CD8-positive, alpha-beta memory T cell (primary cell): ENCODE measurements at regions of chr9 and their contacts with region 1.

Region 1: GRCh38 chr9:91422758-91423711 is 597 bp downstream of the NFIL3 start:
- DNase-seq: peak; percentile 36 to 81 (median 53)
- H3K4me3 ChIP-seq: peak overlapping the region; percentile 75
- H3K4me3 Mint-ChIP-seq: peak overlapping the region; percentile 88 to 98 (median 94)
- H3K27ac ChIP-seq: peak overlapping the region; percentile 67
- H3K27ac Mint-ChIP-seq: peak overlapping the region; percentile 82 to 95 (median 89)
- H3K4me1 ChIP-seq: peaks cover 38% of the 10 kb centered on the region
- H3K4me1 Mint-ChIP-seq: peaks cover 41 to 46% (median 44%) of the 10 kb centered on the region in 3 donors
- H3K27me3 ChIP-seq: no peaks in the 10 kb centered on the region
- H3K27me3 Mint-ChIP-seq: peaks cover 23 to 33% of the 10 kb centered on the region in 2 donors

Region 2: GRCh38 chr9:90914868-90915483 is 508.1 kb before region 1 on chr9:
- CTCF ChIA-PET with region 1: interaction called, 51 read pairs
- POLR2A ChIA-PET with region 1: no interaction called
- DNase-seq: peak; percentile 57 to 79 (median 59)
- H3K4me3 ChIP-seq: no peak overlapping the region
- H3K4me3 Mint-ChIP-seq: no peak overlapping the region
- H3K27ac ChIP-seq: no peak overlapping the region
- H3K27ac Mint-ChIP-seq: no peak overlapping the region
- H3K4me1 ChIP-seq: no peaks in the 10 kb centered on the region
- H3K4me1 Mint-ChIP-seq: no peaks in the 10 kb centered on the region
- H3K27me3 ChIP-seq: no peaks in the 10 kb centered on the region
- H3K27me3 Mint-ChIP-seq: no peaks in the 10 kb centered on the region

Region 3: DNA sequence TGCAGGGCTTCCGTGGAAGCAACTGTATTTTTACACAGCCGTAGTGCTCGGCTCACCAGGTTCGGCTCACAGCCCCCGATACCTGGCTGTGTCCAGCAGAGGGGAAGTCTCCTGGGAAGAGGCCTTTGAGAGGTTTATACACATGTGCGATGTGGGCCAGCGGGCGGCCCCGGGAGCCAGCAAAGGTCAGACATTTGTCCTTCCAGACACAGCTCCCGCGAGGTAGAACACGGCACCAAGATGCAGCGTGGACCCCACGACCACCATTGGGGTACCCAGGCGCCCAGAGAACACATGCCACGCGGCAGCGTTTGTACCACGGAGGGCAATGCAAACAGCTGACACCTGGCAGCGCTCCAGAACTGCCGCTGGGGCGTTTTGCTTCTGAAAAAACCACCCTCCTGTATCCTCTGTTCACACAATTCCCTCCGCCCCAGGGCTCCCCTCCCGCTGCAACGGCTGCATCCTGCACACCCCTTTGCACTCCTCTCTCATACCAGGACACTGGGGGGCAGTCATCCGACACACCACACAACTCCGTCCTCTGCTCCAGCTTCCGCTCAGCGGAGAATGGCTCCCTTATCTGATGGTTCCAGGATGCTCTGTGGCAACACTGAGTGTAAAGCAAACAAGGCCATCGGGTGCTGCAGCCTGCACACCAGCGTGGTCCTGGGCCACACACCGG is 386.1 kb before region 1 on chr9:
- CTCF ChIA-PET with region 1: interaction called, 34 read pairs
- POLR2A ChIA-PET with region 1: no interaction called
- DNase-seq: peak; percentile 28 to 73 (median 50)
- H3K4me3 ChIP-seq: no peak overlapping the region
- H3K4me3 Mint-ChIP-seq: peak overlapping the region in 5 of 7 donors; percentile 33 to 73 (median 63)
- H3K27ac ChIP-seq: no peak overlapping the region
- H3K27ac Mint-ChIP-seq: peak overlapping the region in 2 of 8 donors; percentile 26
- H3K4me1 ChIP-seq: peaks cover 11% of the 10 kb centered on the region
- H3K4me1 Mint-ChIP-seq: peaks cover 19 to 23% (median 19%) of the 10 kb centered on the region in 3 donors
- H3K27me3 ChIP-seq: no peaks in the 10 kb centered on the region
- H3K27me3 Mint-ChIP-seq: peaks cover 8 to 9% of the 10 kb centered on the region in 2 donors

Region 4: GRCh38 chr9:91361291-91362050 is 61.6 kb before region 1 on chr9 and contains the start of gene AUH:
- CTCF ChIA-PET with region 1: interaction called, 5 read pairs
- POLR2A ChIA-PET with region 1: interaction called, 11 read pairs
- DNase-seq: peak; percentile 80 to 89 (median 86)
- H3K4me3 ChIP-seq: peak within 1 kb of the TSS; percentile 91
- H3K4me3 Mint-ChIP-seq: peak within 1 kb of the TSS; percentile 90 to 99 (median 99)
- H3K27ac ChIP-seq: peak within 1 kb of the TSS; percentile 83
- H3K27ac Mint-ChIP-seq: peak within 1 kb of the TSS; percentile 83 to 100 (median 96)
- H3K4me1 ChIP-seq: peaks cover 30% of the 10 kb centered on the region
- H3K4me1 Mint-ChIP-seq: peaks cover 42 to 59% (median 54%) of the 10 kb centered on the region in 3 donors
- H3K27me3 ChIP-seq: no peaks in the 10 kb centered on the region
- H3K27me3 Mint-ChIP-seq: no peaks in the 10 kb centered on the region
- total RNA-seq, gene AUH: 33.5 to 35.0 TPM